ENCODE measurements at regions of chr5 and their contacts with region 1.

Region 1: GRCh38 chr5:172188033-172188892 is at the start of gene STK10:
- DNase-seq: peak; percentile 93
- H3K4me3 Mint-ChIP-seq: peak within 1 kb of the TSS; percentile 99
- H3K27ac Mint-ChIP-seq: peak within 1 kb of the TSS; percentile 99
- H3K4me1 Mint-ChIP-seq: peaks cover 25% of the 10 kb centered on the region
- H3K27me3 Mint-ChIP-seq: no peaks in the 10 kb centered on the region
- total RNA-seq, gene STK10: 98.2 to 104 TPM

Region 2: GRCh38 chr5:171387345-171387969 is 800.8 kb before region 1 on chr5 and contains the start of gene NPM1:
- CTCF ChIA-PET with region 1: no interaction called
- POLR2A ChIA-PET with region 1: no interaction called
- intact Hi-C with region 1: loop called (anchors 5 kb)
- DNase-seq: peak; percentile 98
- H3K4me3 Mint-ChIP-seq: peak within 1 kb of the TSS; percentile 93
- H3K27ac Mint-ChIP-seq: peak within 1 kb of the TSS; percentile 96
- H3K4me1 Mint-ChIP-seq: peaks cover 39% of the 10 kb centered on the region
- H3K27me3 Mint-ChIP-seq: peaks cover 3% of the 10 kb centered on the region
- total RNA-seq, gene NPM1: 2,483 to 2,592 TPM

Region 3: DNA sequence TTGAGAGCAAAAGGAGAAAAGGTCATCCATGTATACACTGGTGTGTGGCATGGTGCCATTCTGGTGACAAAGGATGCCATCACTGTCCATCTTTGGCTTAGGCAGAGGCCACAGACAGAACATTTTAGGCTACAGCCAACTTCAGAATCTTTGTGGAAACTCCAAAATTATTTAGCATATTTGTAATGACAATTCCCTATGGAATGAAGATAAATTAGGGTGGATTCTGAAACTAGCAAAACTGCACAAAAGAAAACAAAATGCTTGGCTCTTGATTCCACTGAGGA is 274.3 kb before region 1 on chr5:
- CTCF ChIA-PET with region 1: interaction called, 14 read pairs
- POLR2A ChIA-PET with region 1: no interaction called
- intact Hi-C with region 1: loop called (anchors 5 kb)
- DNase-seq: no peak
- H3K4me3 Mint-ChIP-seq: no peak overlapping the region
- H3K27ac Mint-ChIP-seq: peak overlapping the region; percentile 67
- H3K4me1 Mint-ChIP-seq: peaks cover 38% of the 10 kb centered on the region
- H3K27me3 Mint-ChIP-seq: no peaks in the 10 kb centered on the region

Region 4: GRCh38 chr5:172065501-172065990 is 122.7 kb before region 1 on chr5:
- CTCF ChIA-PET with region 1: interaction called, 15 read pairs
- POLR2A ChIA-PET with region 1: no interaction called
- intact Hi-C with region 1: loop called (anchors 1 kb)
- DNase-seq: no peak
- H3K4me3 Mint-ChIP-seq: no peak overlapping the region
- H3K27ac Mint-ChIP-seq: no peak overlapping the region
- H3K4me1 Mint-ChIP-seq: peaks cover 50% of the 10 kb centered on the region
- H3K27me3 Mint-ChIP-seq: no peaks in the 10 kb centered on the region

Region 5: DNA sequence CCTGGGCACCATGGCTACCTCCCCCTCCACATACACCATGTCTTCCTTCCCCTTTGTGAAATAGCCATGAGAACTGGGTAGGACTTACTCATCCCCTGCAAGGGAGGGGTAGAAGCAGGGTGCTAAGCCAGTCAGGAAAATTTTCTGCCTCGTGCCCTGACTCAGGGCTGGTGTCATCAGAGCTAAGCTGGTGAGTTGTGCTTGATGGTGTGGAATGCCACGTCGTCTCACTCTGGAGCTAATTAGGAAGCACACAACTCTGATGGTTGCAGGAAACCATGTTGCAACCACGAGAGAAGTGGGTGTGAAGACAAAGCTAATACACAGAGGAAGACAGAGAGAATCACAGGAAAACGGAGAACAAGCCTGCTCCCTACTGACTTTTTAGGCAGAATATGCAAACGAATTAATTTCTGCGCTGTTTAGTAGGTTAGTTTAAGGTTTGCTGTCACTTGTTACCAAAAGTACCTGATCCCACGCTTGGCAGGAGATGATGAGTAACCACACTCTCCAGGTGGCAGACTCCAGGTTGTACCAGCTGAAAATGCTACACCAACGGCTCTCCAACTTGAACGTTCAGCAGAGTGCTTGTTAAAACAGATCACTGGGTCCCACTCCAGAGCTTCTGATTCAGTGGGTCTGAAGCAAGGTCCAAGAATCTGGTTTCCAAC is 54.8 kb before region 1 on chr5:
- CTCF ChIA-PET with region 1: interaction called, 12 read pairs
- POLR2A ChIA-PET with region 1: interaction called, 3 read pairs
- intact Hi-C with region 1: loop called (anchors 2 kb)
- DNase-seq: peak; percentile 85
- H3K4me3 Mint-ChIP-seq: peak overlapping the region; percentile 43
- H3K27ac Mint-ChIP-seq: peak overlapping the region; percentile 92
- H3K4me1 Mint-ChIP-seq: peaks cover 64% of the 10 kb centered on the region
- H3K27me3 Mint-ChIP-seq: no peaks in the 10 kb centered on the region

Region 6: GRCh38 chr5:172223901-172224873 is 35.9 kb after region 1 on chr5:
- CTCF ChIA-PET with region 1: interaction called, 12 read pairs
- POLR2A ChIA-PET with region 1: interaction called, 11 read pairs
- intact Hi-C with region 1: no loop called
- DNase-seq: peak; percentile 84
- H3K4me3 Mint-ChIP-seq: no peak overlapping the region
- H3K27ac Mint-ChIP-seq: peak overlapping the region; percentile 70
- H3K4me1 Mint-ChIP-seq: peaks cover 33% of the 10 kb centered on the region
- H3K27me3 Mint-ChIP-seq: peaks cover 4% of the 10 kb centered on the region

Region 7: DNA sequence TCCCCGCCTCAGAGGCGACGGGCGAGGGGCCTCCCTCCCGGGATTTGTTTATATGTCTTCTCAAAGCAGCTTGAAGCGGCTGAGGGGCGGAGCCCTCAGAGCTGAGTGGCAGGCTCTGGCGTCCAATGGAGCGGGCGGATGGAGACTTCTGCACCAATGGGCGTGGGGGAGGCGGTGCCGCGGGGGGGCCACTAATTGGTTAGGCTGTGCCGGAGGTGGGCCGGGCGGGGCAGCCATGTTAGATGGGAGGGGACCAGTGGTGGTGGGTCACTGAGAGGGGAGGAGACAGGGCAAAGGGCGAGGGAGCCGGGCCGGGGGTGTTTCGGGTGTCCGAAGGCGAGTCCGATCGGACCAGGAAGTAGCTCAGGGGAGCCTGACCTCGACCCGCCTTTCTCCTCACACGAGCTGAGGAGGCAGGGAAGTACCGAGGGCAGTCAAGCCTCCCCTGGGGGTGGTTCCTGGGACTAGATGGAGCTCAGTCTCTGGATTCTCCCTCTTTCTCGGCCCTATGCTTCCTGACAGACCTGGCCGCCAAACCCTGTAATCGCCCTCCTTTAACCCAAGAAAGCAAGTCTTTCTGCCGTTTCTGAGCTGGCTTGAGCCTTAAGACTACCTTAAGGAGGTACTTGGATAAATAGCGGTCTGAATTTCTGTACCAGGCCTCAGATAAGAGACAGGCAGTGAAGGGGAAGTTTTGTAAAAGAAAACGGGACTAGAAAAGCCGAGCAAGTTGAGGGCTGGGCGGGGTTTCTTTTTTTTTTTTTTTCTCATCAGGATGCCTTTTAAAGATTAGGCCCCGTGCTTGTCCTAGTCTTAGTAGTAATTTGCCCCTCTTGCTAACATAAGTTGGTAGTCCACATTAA is 869.0 kb after region 1 on chr5:
- CTCF ChIA-PET with region 1: no interaction called
- POLR2A ChIA-PET with region 1: no interaction called
- intact Hi-C with region 1: loop called (anchors 5 kb)
- DNase-seq: peak; percentile 100
- H3K4me3 Mint-ChIP-seq: peak overlapping the region; percentile 97
- H3K27ac Mint-ChIP-seq: peak overlapping the region; percentile 97
- H3K4me1 Mint-ChIP-seq: peaks cover 44% of the 10 kb centered on the region
- H3K27me3 Mint-ChIP-seq: no peaks in the 10 kb centered on the region